Activated naive CD4-positive, alpha-beta T cell treated with anti-CD3 and anti-CD28 coated beads for 36 hours (primary cell): ENCODE measurements at regions of chr10 and their contacts with region 1.

Region 1: GRCh38 chr10:120948889-120949608 is 97.9 kb downstream of the WDR11 start:
- DNase-seq: peak; percentile 68
- H3K4me3 Mint-ChIP-seq: no peak overlapping the region
- H3K27ac Mint-ChIP-seq: no peak overlapping the region
- H3K4me1 Mint-ChIP-seq: peaks cover 7% of the 10 kb centered on the region
- H3K27me3 Mint-ChIP-seq: peaks cover 44% of the 10 kb centered on the region

Region 2: GRCh38 chr10:121608469-121609190 is 659.6 kb after region 1 on chr10:
- CTCF ChIA-PET with region 1: no interaction called
- intact Hi-C with region 1: loop called (anchors 1 kb)
- DNase-seq: peak; percentile 38
- H3K4me3 Mint-ChIP-seq: no peak overlapping the region
- H3K27ac Mint-ChIP-seq: no peak overlapping the region
- H3K4me1 Mint-ChIP-seq: no peaks in the 10 kb centered on the region
- H3K27me3 Mint-ChIP-seq: peaks cover 26% of the 10 kb centered on the region